Activated CD8-positive, alpha-beta T cell treated with anti-CD3 and anti-CD28 coated beads for 36 hours (primary cell): ENCODE measurements at regions of chr19 and their contacts with region 1.

Region 1: GRCh38 chr19:13060964-13061927 is 41.4 kb downstream of the LYL1 start:
- DNase-seq: peak; percentile 88
- ATAC-seq: peak; percentile 99
- H3K4me3 Mint-ChIP-seq: peak overlapping the region; percentile 65
- H3K27ac Mint-ChIP-seq: no peak overlapping the region
- H3K4me1 Mint-ChIP-seq: peaks cover 6% of the 10 kb centered on the region
- H3K27me3 Mint-ChIP-seq: peaks cover 14% of the 10 kb centered on the region
- CTCF ChIP-seq: peak; percentile 98

Region 2: GRCh38 chr19:12938234-12939025 is 122.8 kb before region 1 on chr19 and contains the start of gene CALR:
- CTCF ChIA-PET with region 1: no interaction called
- POLR2A ChIA-PET with region 1: no interaction called
- intact Hi-C with region 1: no loop called
- DNase-seq: peak; percentile 100
- ATAC-seq: peak; percentile 87
- H3K4me3 Mint-ChIP-seq: peak within 1 kb of the TSS; percentile 99
- H3K27ac Mint-ChIP-seq: peak within 1 kb of the TSS; percentile 95
- H3K4me1 Mint-ChIP-seq: peaks cover 49% of the 10 kb centered on the region
- H3K27me3 Mint-ChIP-seq: no peaks in the 10 kb centered on the region
- CTCF ChIP-seq: no peak
- total RNA-seq, gene CALR: 535 to 563 TPM

Region 3: GRCh38 chr19:12983542-12984142 is 77.6 kb before region 1 on chr19:
- CTCF ChIA-PET with region 1: interaction called, 160 read pairs
- POLR2A ChIA-PET with region 1: no interaction called
- intact Hi-C with region 1: loop called (anchors 5 kb)
- DNase-seq: peak; percentile 85
- ATAC-seq: peak; percentile 89
- H3K4me3 Mint-ChIP-seq: no peak overlapping the region
- H3K27ac Mint-ChIP-seq: no peak overlapping the region
- H3K4me1 Mint-ChIP-seq: peaks cover 2% of the 10 kb centered on the region
- H3K27me3 Mint-ChIP-seq: peaks cover 4% of the 10 kb centered on the region
- CTCF ChIP-seq: peak; percentile 97

Region 4: DNA sequence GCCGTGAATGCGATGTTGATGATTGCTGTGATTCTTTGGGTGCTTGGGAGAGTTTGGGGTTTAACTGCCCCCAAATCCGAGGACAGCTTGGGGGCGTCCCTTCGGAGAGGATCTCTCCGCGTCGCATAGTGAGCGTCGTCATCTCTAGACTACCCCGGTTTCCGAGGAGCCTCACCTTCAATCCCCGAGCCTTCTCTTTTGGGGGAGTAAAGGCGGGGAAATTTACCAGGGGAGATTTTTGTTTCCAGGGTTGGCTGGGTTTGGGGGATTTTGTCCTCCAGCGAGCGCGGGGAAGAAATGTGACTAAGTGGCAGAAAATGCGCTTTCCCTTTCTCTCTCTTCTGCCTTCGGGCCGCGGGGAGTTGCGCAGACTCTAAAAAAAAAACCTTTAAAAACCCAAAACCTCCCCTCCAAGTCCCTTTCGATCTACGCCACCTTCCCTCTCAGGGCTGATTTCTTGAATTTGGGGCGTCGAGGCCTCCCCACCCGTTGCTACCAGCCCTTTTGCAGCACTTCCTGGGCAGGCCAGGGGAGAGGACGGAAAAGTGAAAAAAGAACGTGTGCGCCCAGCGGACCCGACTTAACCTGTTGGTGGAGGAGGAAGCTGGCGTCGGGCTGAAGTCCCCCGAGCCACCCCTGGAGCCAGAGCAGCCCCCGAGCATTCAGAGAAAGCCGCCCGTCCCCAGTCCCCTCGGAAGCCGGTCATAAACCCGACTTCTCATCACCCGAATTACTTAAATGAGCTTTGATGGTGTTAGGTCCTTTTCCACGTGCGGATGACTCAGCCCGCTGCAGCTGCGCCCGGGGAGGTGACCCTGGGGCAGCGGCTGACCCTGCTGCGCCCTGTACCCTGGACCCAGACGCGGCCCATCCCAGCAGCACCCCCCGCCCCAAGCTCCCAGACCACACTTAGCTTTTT is 48.3 kb before region 1 on chr19:
- CTCF ChIA-PET with region 1: interaction called, 22 read pairs
- POLR2A ChIA-PET with region 1: no interaction called
- intact Hi-C with region 1: no loop called
- DNase-seq: peak; percentile 70
- ATAC-seq: peak; percentile 62
- H3K4me3 Mint-ChIP-seq: peak overlapping the region; percentile 77
- H3K27ac Mint-ChIP-seq: peak overlapping the region; percentile 75
- H3K4me1 Mint-ChIP-seq: peaks cover 19% of the 10 kb centered on the region
- H3K27me3 Mint-ChIP-seq: peaks cover 59% of the 10 kb centered on the region
- CTCF ChIP-seq: no peak

Region 5: GRCh38 chr19:13033819-13034611 is 27.2 kb before region 1 on chr19:
- CTCF ChIA-PET with region 1: interaction called, 99 read pairs
- POLR2A ChIA-PET with region 1: no interaction called
- intact Hi-C with region 1: no loop called
- DNase-seq: peak; percentile 77
- ATAC-seq: peak; percentile 88
- H3K4me3 Mint-ChIP-seq: no peak overlapping the region
- H3K27ac Mint-ChIP-seq: no peak overlapping the region
- H3K4me1 Mint-ChIP-seq: peaks cover 10% of the 10 kb centered on the region
- H3K27me3 Mint-ChIP-seq: no peaks in the 10 kb centered on the region
- CTCF ChIP-seq: peak; percentile 75

Region 6: GRCh38 chr19:13082192-13083007 is 21.2 kb after region 1 on chr19:
- CTCF ChIA-PET with region 1: interaction called, 29 read pairs
- POLR2A ChIA-PET with region 1: no interaction called
- intact Hi-C with region 1: no loop called
- DNase-seq: no peak
- ATAC-seq: no peak
- H3K4me3 Mint-ChIP-seq: no peak overlapping the region
- H3K27ac Mint-ChIP-seq: no peak overlapping the region
- H3K4me1 Mint-ChIP-seq: no peaks in the 10 kb centered on the region
- H3K27me3 Mint-ChIP-seq: no peaks in the 10 kb centered on the region
- CTCF ChIP-seq: no peak

Region 7: GRCh38 chr19:13104360-13104847 is 43.2 kb after region 1 on chr19:
- CTCF ChIA-PET with region 1: interaction called, 14 read pairs
- POLR2A ChIA-PET with region 1: no interaction called
- intact Hi-C with region 1: no loop called
- DNase-seq: peak; percentile 74
- ATAC-seq: peak; percentile 63
- H3K4me3 Mint-ChIP-seq: peak overlapping the region; percentile 80
- H3K27ac Mint-ChIP-seq: peak overlapping the region; percentile 86
- H3K4me1 Mint-ChIP-seq: peaks cover 28% of the 10 kb centered on the region
- H3K27me3 Mint-ChIP-seq: no peaks in the 10 kb centered on the region
- CTCF ChIP-seq: peak; percentile 98

Region 8: DNA sequence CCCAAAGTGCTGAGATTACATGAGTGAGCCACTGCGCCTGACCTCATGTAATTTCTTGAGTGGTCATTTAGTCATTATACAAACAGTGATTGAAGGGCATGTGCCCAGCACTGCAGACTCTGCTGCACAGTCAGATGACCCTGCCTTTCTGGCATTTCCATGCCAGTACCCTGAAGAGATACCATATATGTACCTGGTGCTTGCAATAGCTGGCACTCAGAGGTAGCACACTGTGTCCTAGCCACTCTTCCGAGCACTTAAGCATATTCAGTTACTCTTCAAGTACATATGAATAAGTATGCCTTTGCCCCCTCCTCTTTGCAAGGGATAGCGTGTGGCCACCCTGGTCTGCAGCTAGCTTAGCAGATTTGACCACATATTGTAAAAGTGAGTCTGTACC is 73.4 kb after region 1 on chr19:
- CTCF ChIA-PET with region 1: no interaction called
- POLR2A ChIA-PET with region 1: no interaction called
- intact Hi-C with region 1: no loop called
- DNase-seq: no peak
- ATAC-seq: no peak
- H3K4me3 Mint-ChIP-seq: no peak overlapping the region
- H3K27ac Mint-ChIP-seq: no peak overlapping the region
- H3K4me1 Mint-ChIP-seq: peaks cover 32% of the 10 kb centered on the region
- H3K27me3 Mint-ChIP-seq: no peaks in the 10 kb centered on the region
- CTCF ChIP-seq: no peak

Region 9: DNA sequence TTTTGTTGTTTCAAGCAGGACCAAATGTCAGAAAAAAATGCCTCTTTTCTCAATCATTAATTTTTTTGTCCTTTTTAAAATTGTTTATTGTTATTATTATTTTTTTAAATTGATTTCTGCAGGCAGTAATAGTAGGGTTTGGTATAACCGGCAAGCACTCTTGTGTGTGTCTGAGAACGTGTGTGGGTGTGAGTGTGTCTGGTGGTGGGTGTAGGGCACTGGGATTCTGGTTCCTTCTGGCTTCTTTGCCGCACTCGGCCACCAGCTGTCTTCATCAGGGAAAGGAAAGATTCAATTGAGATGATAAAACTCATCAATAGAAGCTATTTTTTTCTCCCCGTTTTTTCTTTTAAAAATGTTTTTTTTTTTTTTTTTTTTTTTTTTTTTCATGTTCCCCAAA is 145.3 kb after region 1 on chr19:
- CTCF ChIA-PET with region 1: no interaction called
- POLR2A ChIA-PET with region 1: no interaction called
- intact Hi-C with region 1: no loop called
- DNase-seq: no peak
- ATAC-seq: no peak
- H3K4me3 Mint-ChIP-seq: peak overlapping the region; percentile 26
- H3K27ac Mint-ChIP-seq: peak overlapping the region; percentile 73
- H3K4me1 Mint-ChIP-seq: peaks cover 21% of the 10 kb centered on the region
- H3K27me3 Mint-ChIP-seq: no peaks in the 10 kb centered on the region
- CTCF ChIP-seq: no peak